Activated naive CD4-positive, alpha-beta T cell treated with anti-CD3 and anti-CD28 coated beads for 36 hours (primary cell): ENCODE measurements at regions of chr10 and their contacts with region 1.

Region 1: DNA sequence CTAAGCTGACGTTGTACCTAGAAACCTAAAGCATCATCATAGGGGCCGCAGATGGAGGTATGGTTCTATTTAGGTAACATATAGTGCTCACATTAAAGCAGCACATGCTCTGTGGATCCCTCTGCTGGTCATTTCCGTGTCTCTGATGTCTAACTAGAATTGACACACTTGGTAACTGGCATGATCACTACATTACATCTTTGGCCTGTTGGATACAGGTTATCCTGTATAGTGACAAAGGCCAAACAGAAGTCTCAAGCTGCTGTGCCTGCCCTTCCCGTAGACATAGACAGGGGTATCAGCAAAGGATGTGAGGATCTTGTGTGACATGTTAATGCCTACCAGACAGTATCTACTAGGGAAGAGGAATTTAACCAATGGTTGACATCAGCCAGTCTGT is 51.2 kb downstream of the KIF5B start:
- DNase-seq: peak; percentile 64
- H3K4me3 Mint-ChIP-seq: no peak overlapping the region
- H3K27ac Mint-ChIP-seq: peak overlapping the region; percentile 46
- H3K4me1 Mint-ChIP-seq: peaks cover 2% of the 10 kb centered on the region
- H3K27me3 Mint-ChIP-seq: no peaks in the 10 kb centered on the region

Region 2: GRCh38 chr10:31836569-31837406 is 168.3 kb before region 1 on chr10:
- CTCF ChIA-PET with region 1: no interaction called
- intact Hi-C with region 1: loop called (anchors 2 kb)
- DNase-seq: peak; percentile 15
- H3K4me3 Mint-ChIP-seq: no peak overlapping the region
- H3K27ac Mint-ChIP-seq: no peak overlapping the region
- H3K4me1 Mint-ChIP-seq: peaks cover 7% of the 10 kb centered on the region
- H3K27me3 Mint-ChIP-seq: no peaks in the 10 kb centered on the region

Region 3: DNA sequence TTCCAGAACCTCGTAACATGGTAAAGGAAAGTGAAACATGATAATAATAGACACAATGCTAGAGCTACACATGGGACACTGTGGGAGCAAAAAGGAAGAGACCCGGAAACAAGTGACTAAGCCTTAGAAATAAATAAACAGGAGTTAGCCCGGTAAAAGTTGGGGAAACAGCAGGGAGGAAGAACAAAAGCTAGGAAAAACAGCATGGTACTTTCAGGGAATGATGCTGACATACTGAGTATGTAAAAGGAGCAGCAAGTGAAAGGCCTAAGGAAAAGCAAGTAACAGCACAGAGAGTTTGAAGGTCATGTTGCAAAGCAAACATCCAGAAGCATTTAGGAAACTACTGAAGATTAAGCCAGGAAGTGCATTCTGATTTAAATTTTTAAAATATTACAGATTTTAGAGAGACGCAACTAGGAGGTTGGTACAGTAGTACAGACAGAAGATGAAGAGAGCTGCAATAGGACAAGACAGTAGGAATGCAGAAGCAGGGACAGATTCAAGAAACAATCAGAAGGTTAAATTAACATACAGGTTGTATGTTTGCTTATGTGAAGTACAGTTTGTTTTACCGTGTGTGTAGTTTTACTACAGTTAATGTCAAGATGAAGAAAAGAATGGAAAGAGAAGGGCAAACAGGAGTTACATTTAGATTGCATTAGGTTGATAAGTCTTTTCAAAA is 140.1 kb before region 1 on chr10:
- CTCF ChIA-PET with region 1: interaction called, 34 read pairs
- intact Hi-C with region 1: loop called (anchors 1 kb)
- DNase-seq: no peak
- H3K4me3 Mint-ChIP-seq: no peak overlapping the region
- H3K27ac Mint-ChIP-seq: no peak overlapping the region
- H3K4me1 Mint-ChIP-seq: peaks cover 21% of the 10 kb centered on the region
- H3K27me3 Mint-ChIP-seq: no peaks in the 10 kb centered on the region

Region 4: GRCh38 chr10:31961277-31962074 is 43.6 kb before region 1 on chr10:
- CTCF ChIA-PET with region 1: no interaction called
- intact Hi-C with region 1: loop called (anchors 5 kb)
- DNase-seq: peak; percentile 25
- H3K4me3 Mint-ChIP-seq: no peak overlapping the region
- H3K27ac Mint-ChIP-seq: no peak overlapping the region
- H3K4me1 Mint-ChIP-seq: peaks cover 17% of the 10 kb centered on the region
- H3K27me3 Mint-ChIP-seq: peaks cover 1% of the 10 kb centered on the region

Region 5: GRCh38 chr10:32023264-32023663 is 18.2 kb after region 1 on chr10:
- CTCF ChIA-PET with region 1: no interaction called
- intact Hi-C with region 1: no loop called
- DNase-seq: no peak
- H3K4me3 Mint-ChIP-seq: no peak overlapping the region
- H3K27ac Mint-ChIP-seq: peak overlapping the region; percentile 42
- H3K4me1 Mint-ChIP-seq: peaks cover 2% of the 10 kb centered on the region
- H3K27me3 Mint-ChIP-seq: no peaks in the 10 kb centered on the region

Region 6: DNA sequence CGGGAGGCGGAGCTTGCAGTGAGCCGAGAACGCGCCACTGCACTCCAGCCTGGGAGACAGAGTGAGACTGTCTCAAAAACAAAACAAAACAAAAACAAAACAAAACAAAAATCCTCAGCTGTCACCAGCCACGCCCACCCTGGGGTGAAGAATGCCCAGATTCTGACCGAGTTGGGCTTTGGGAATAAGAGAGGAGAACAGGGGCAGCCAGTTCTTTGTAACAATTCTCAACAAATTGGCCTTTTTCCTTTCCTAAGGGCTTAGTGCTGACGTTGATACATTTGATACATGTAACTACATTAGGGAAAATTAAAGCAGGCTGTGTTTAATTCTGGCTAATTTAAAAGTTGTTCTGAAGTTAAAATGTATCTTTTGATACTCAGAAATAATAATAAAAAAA is 220.9 kb after region 1 on chr10:
- CTCF ChIA-PET with region 1: no interaction called
- intact Hi-C with region 1: no loop called
- DNase-seq: no peak
- H3K4me3 Mint-ChIP-seq: no peak overlapping the region
- H3K27ac Mint-ChIP-seq: no peak overlapping the region
- H3K4me1 Mint-ChIP-seq: no peaks in the 10 kb centered on the region
- H3K27me3 Mint-ChIP-seq: no peaks in the 10 kb centered on the region

Region 7: GRCh38 chr10:32459051-32459698 is 454.1 kb after region 1 on chr10:
- CTCF ChIA-PET with region 1: no interaction called
- intact Hi-C with region 1: no loop called
- DNase-seq: peak; percentile 17
- H3K4me3 Mint-ChIP-seq: no peak overlapping the region
- H3K27ac Mint-ChIP-seq: no peak overlapping the region
- H3K4me1 Mint-ChIP-seq: peaks cover 34% of the 10 kb centered on the region
- H3K27me3 Mint-ChIP-seq: no peaks in the 10 kb centered on the region